GM18951 (cell line): ENCODE measurements at regions of chr10 and their contacts with region 1.

Region 1: GRCh38 chr10:7525314-7526016 is 114.6 kb upstream of the SFMBT2 start:
- POLR2A ChIP-seq: no peak

Region 2: GRCh38 chr10:9294865-9295264 is 1769.4 kb after region 1 on chr10:
- in situ Hi-C with region 1: loop called (anchors 25 kb)
- POLR2A ChIP-seq: no peak